HEK293T (cell line): ENCODE measurements at regions of chr16 and their contacts with region 1.

Region 1: GRCh38 chr16:56600398-56600999 is 7.9 kb upstream of the MT2A start:
- DNase-seq: peak; percentile 52

Region 2: GRCh38 chr16:56513972-56514371 is 86.5 kb before region 1 on chr16:
- CTCF ChIA-PET with region 1: interaction called, 10 read pairs
- POLR2A ChIA-PET with region 1: no interaction called
- DNase-seq: peak; percentile 47

Region 3: GRCh38 chr16:56534847-56535383 is 65.6 kb before region 1 on chr16:
- CTCF ChIA-PET with region 1: no interaction called
- POLR2A ChIA-PET with region 1: no interaction called
- DNase-seq: no peak

Region 4: GRCh38 chr16:56673921-56674320 is 73.4 kb after region 1 on chr16:
- CTCF ChIA-PET with region 1: no interaction called
- POLR2A ChIA-PET with region 1: no interaction called
- DNase-seq: no peak